ENCODE measurements at regions of chr16 and their contacts with region 1.

Region 1: DNA sequence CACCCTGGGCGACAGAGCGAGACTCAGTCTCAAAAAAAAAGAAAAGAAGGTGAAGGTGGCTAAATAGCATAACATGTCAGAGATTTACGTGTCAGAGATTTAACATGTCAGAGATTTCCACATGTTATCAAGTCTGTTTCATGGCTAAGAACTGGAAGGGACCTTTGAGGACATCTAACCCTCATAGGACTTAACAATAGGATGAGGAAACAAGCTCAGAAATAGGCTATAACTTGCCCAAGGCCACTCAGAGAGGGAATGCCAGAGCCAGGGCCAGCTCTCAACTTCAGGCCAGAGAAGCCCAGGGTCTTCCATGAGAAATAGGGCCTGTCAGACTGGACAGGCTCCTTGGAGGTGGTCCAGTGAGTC is 26.8 kb upstream of the ZNF629 start:
- DNase-seq: no peak
- ATAC-seq: no peak
- H3K4me3 Mint-ChIP-seq: peak overlapping the region; percentile 65
- H3K27ac Mint-ChIP-seq: no peak overlapping the region
- H3K4me1 Mint-ChIP-seq: peaks cover 6% of the 10 kb centered on the region; the same call in 1 of the 2 replicates
- H3K27me3 Mint-ChIP-seq: peaks cover 38% of the 10 kb centered on the region
- CTCF ChIP-seq: no peak

Region 2: GRCh38 chr16:30551781-30552180 is 262.0 kb before region 1 on chr16:
- CTCF ChIA-PET with region 1: no interaction called
- POLR2A ChIA-PET with region 1: no interaction called
- DNase-seq: no peak
- ATAC-seq: no peak
- H3K4me3 Mint-ChIP-seq: no peak overlapping the region
- H3K27ac Mint-ChIP-seq: no peak overlapping the region
- H3K4me1 Mint-ChIP-seq: peaks cover 27% of the 10 kb centered on the region
- H3K27me3 Mint-ChIP-seq: no peaks in the 10 kb centered on the region
- CTCF ChIP-seq: no peak

Region 3: DNA sequence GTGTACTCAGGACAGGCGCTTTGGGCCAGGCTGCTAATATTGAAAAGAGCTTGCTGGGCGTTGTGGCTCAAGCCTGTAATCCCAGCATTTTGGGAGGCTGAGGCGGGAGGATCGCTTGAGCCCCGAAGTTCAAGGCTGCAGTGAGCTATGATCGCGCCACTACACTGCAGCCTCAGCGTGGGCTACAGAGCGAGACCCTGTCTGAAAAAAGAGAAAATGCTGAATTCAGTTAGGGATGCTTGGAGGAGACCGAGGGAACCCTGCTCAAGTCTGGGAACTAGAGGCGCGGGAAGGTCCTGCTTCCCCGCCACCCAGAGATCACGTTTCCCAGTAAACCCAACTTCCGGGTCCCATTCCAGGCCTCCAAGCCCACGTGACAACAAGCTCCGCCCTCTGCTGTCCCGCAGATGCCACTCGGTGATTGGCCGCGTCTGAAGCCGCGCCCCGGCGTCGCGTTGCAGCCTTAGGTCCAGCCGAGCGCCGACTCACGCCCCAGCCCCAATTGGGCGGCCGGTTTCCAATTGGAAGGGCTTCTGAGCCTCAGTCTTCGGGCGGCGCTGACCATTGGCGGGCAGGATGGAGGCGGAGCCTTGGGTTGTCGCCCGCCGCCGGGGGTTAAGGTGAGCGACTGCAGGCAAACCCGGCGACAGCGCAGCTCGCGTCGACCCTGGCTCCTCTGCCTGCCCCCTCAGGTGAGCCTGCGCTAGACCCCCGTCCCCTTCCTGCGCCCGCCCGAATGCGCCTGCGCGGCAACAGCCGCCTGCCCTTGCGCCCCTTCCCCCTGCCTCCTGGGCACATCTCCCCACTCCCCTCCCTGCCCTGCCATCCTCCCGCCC is 65.8 kb before region 1 on chr16 and contains the start of gene PHKG2:
- CTCF ChIA-PET with region 1: interaction called, 11 read pairs
- POLR2A ChIA-PET with region 1: no interaction called
- DNase-seq: peak; percentile 99
- ATAC-seq: peak; percentile 97
- H3K4me3 Mint-ChIP-seq: peak within 1 kb of the TSS; percentile 94
- H3K27ac Mint-ChIP-seq: peak within 1 kb of the TSS; percentile 96
- H3K4me1 Mint-ChIP-seq: peaks cover 7% of the 10 kb centered on the region
- H3K27me3 Mint-ChIP-seq: no peaks in the 10 kb centered on the region
- CTCF ChIP-seq: no peak
- total RNA-seq, gene PHKG2: 40.8 to 50.5 TPM (median 45.0 TPM) in 3 replicates

Region 4: GRCh38 chr16:30786936-30787612 is 26.7 kb before region 1 on chr16 and contains the start of gene ZNF629:
- CTCF ChIA-PET with region 1: interaction called, 13 read pairs
- POLR2A ChIA-PET with region 1: no interaction called
- DNase-seq: peak; percentile 70
- ATAC-seq: peak; percentile 77
- H3K4me3 Mint-ChIP-seq: peak within 1 kb of the TSS; percentile 84
- H3K27ac Mint-ChIP-seq: no peak within 1 kb of the TSS
- H3K4me1 Mint-ChIP-seq: peaks cover 13% of the 10 kb centered on the region
- H3K27me3 Mint-ChIP-seq: peaks cover 10% of the 10 kb centered on the region
- CTCF ChIP-seq: no peak
- total RNA-seq, gene ZNF629: 18.7 to 20.0 TPM (median 19.7 TPM) in 3 replicates

Region 5: DNA sequence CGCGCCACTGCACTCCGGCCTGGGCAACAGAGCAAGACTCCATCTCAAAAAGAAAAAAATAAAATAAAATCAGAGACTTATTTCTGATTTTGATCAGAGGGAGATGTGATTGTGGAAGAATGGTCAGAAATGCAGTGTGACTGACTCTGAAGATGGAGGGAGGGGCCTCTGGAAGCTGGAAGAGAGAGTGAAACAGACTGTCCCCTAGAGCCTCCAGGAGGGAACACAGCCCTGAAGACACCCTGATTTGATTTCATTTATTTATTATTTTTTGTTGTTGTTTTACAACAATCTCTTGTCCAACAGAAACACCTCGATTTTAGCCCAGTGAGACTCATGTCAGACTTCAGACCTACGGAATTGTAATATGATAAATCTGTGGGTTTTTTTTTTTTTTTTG is 53.9 kb after region 1 on chr16:
- CTCF ChIA-PET with region 1: interaction called, 11 read pairs
- POLR2A ChIA-PET with region 1: no interaction called
- DNase-seq: no peak
- ATAC-seq: peak; percentile 81
- H3K4me3 Mint-ChIP-seq: no peak overlapping the region
- H3K27ac Mint-ChIP-seq: no peak overlapping the region
- H3K4me1 Mint-ChIP-seq: no peaks in the 10 kb centered on the region
- H3K27me3 Mint-ChIP-seq: peaks cover 27% of the 10 kb centered on the region
- CTCF ChIP-seq: no peak

Region 6: GRCh38 chr16:30902029-30902972 is 88.5 kb after region 1 on chr16:
- CTCF ChIA-PET with region 1: interaction called, 18 read pairs
- POLR2A ChIA-PET with region 1: no interaction called
- DNase-seq: peak; percentile 61
- ATAC-seq: peak; percentile 87
- H3K4me3 Mint-ChIP-seq: peak overlapping the region; percentile 90
- H3K27ac Mint-ChIP-seq: peak overlapping the region; percentile 96
- H3K4me1 Mint-ChIP-seq: peaks cover 9% of the 10 kb centered on the region
- H3K27me3 Mint-ChIP-seq: peaks cover 26% of the 10 kb centered on the region
- CTCF ChIP-seq: no peak